ENCODE measurements at regions of chr6 and their contacts with region 1.

Region 1: GRCh38 chr6:1552296-1552761 is 57.4 kb upstream of the FOXC1 start:
- DNase-seq: no peak
- H3K4me3 ChIP-seq: no peak overlapping the region
- H3K27ac ChIP-seq: no peak overlapping the region
- H3K4me1 ChIP-seq: peaks cover 0 to 4% (median 2%) of the 10 kb centered on the region in 4 experiments; a peak in 1 of 7 replicates
- H3K27me3 ChIP-seq: no peaks in the 10 kb centered on the region; a peak in 1 of 7 replicates
- CTCF ChIP-seq: peak in 2 of 3 experiments; percentile 31 to 48; a peak in 2 of 4 replicates
- EP300 ChIP-seq: no peak
- POLR2A ChIP-seq: no peak
- RAD21 ChIP-seq: peak; percentile 32 to 45

Region 2: GRCh38 chr6:1524040-1524480 is 28.3 kb before region 1 on chr6:
- CTCF ChIA-PET with region 1: interaction called, 14 read pairs
- POLR2A ChIA-PET with region 1: no interaction called
- DNase-seq: peak; percentile 61 to 94
- H3K4me3 ChIP-seq: peak overlapping the region in 1 of 4 experiments; percentile 29; a peak in 1 of 8 replicates
- H3K27ac ChIP-seq: no peak overlapping the region
- H3K4me1 ChIP-seq: peaks cover 0 to 4% (median 3%) of the 10 kb centered on the region in 4 experiments; a peak in 5 of 7 replicates
- H3K27me3 ChIP-seq: peaks cover 4 to 48% (median 39%) of the 10 kb centered on the region in 4 experiments
- CTCF ChIP-seq: peak; percentile 67 to 84 (median 81)
- EP300 ChIP-seq: no peak
- POLR2A ChIP-seq: no peak
- RAD21 ChIP-seq: peak; percentile 73 to 84

Region 3: DNA sequence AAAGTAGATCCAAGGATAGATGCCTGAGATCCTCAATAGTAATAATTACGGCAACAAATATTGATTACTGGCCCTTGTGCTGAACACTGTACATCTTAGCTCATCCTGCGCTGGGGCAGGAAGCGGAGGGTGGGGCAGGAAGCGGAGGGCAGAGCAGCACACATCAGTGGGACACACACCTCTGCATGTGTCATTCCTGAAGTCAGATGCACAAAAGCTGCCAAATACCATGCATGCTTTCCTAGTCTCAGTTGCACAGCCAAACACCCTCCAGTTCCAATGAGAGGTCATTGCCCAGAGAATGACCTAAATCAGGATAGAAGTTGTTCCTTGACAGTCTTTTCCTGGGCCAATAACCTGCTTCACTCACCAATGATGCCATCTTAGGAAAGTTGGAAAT is 17.0 kb before region 1 on chr6:
- CTCF ChIA-PET with region 1: interaction called, 17 read pairs
- POLR2A ChIA-PET with region 1: no interaction called
- DNase-seq: no peak
- H3K4me3 ChIP-seq: no peak overlapping the region
- H3K27ac ChIP-seq: no peak overlapping the region
- H3K4me1 ChIP-seq: no peaks in the 10 kb centered on the region; a peak in 1 of 7 replicates
- H3K27me3 ChIP-seq: no peaks in the 10 kb centered on the region; a peak in 1 of 7 replicates
- CTCF ChIP-seq: no peak
- EP300 ChIP-seq: no peak
- POLR2A ChIP-seq: no peak
- RAD21 ChIP-seq: no peak

Region 4: DNA sequence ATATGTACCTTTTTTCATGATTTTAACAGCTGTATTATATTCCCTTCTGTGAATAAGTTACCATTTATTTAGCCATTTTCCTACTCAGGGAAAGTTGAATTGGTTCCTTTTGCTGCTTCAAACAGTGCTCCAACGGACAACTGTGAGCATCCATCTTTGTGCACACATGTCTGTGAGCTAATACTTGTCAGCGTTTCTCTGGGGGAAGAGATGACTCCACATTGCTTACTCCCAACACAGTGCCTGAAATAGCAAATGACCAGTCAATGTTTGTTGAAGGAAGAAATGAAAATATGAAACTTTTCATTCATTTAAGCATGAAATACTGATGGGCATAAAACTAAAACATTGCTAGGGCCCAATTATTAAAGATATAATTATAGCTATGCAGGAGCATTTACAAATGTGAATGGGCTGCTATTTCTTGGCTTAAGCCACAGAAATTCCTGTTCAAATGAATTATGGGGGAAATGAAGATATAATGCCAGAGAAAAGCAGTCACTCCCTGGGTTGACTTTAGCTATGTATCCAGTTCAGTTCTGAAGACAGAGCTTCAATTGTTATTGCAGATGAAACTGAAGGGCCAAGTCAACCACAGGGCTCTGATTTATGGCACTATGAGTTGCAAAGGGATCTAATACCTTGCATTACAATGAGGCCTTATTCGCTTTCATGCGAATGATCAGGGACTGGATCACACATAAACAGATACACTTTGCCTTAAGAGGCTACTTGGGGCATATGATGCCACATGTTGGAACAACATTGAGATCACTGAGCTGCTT is 10.0 kb after region 1 on chr6:
- CTCF ChIA-PET with region 1: interaction called, 19 read pairs
- POLR2A ChIA-PET with region 1: no interaction called
- DNase-seq: no peak
- H3K4me3 ChIP-seq: no peak overlapping the region
- H3K27ac ChIP-seq: no peak overlapping the region
- H3K4me1 ChIP-seq: no peaks in the 10 kb centered on the region
- H3K27me3 ChIP-seq: no peaks in the 10 kb centered on the region
- CTCF ChIP-seq: no peak
- EP300 ChIP-seq: no peak
- POLR2A ChIP-seq: no peak
- RAD21 ChIP-seq: no peak

Region 5: DNA sequence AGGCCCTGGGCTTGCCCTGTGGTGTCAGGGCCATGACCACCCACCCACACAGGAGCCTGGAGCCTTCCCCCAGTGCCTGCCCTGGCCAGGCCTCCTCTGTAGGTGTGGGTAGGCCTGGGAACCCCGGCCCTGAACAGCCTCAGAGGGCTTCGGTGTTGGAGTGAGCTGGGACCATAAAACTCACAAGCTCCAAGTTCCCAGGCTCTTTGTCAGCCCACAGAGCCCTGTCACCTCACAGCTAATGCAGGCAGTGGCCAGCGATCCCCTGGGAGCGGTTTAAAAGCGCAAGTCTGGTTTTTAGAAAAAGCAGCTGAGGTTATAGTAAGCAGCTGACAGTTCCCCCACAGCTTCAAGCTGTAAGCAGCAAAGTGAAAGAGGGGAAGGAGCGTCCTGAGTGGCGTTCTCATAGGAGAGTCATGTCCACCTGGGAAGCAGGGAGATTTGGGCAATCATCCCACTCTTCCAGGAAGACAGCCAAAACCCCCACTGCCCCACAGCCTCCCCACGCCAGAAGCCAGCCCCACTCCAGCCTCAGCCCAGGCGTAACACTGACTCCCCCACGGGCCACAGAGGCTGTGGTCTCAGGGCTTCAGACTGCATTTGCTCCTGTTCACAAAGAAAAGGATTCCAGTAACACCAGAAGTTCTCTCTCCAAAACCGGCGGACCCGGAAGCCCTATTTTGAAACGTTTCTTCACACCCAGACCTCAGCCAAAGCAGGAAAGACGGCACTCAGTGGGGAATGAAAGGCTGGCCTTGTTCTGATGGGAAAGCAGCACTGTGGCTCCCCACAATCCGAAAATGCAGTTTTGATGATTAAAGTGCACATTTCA is 23.1 kb after region 1 on chr6:
- CTCF ChIA-PET with region 1: interaction called, 14 read pairs
- POLR2A ChIA-PET with region 1: no interaction called
- DNase-seq: no peak
- H3K4me3 ChIP-seq: no peak overlapping the region
- H3K27ac ChIP-seq: no peak overlapping the region
- H3K4me1 ChIP-seq: peaks cover 0 to 8% (median 4%) of the 10 kb centered on the region in 4 experiments; a peak in 4 of 7 replicates
- H3K27me3 ChIP-seq: peaks cover 0 to 3% (median 0%) of the 10 kb centered on the region in 4 experiments; a peak in 1 of 7 replicates
- CTCF ChIP-seq: no peak
- EP300 ChIP-seq: no peak
- POLR2A ChIP-seq: no peak
- RAD21 ChIP-seq: no peak

Region 6: GRCh38 chr6:1594445-1595180 is 42.3 kb after region 1 on chr6:
- CTCF ChIA-PET with region 1: no interaction called
- POLR2A ChIA-PET with region 1: no interaction called
- DNase-seq: no peak
- H3K4me3 ChIP-seq: no peak overlapping the region
- H3K27ac ChIP-seq: no peak overlapping the region
- H3K4me1 ChIP-seq: peaks cover 0 to 4% (median 1%) of the 10 kb centered on the region in 4 experiments; a peak in 4 of 7 replicates
- H3K27me3 ChIP-seq: no peaks in the 10 kb centered on the region; a peak in 3 of 7 replicates
- CTCF ChIP-seq: no peak
- EP300 ChIP-seq: no peak
- POLR2A ChIP-seq: no peak
- RAD21 ChIP-seq: no peak

Measured in H1 (cell line).